ENCODE measurements at regions of chr9 and their contacts with region 1.

Region 1: GRCh38 chr9:34646211-34647083 is at the start of gene GALT:
- DNase-seq: peak; percentile 90 to 98 (median 96)
- H3K4me3 ChIP-seq: peak within 1 kb of the TSS; percentile 95
- H3K4me3 Mint-ChIP-seq: peak within 1 kb of the TSS; percentile 90 to 97 (median 93)
- H3K27ac ChIP-seq: peak within 1 kb of the TSS; percentile 83
- H3K27ac Mint-ChIP-seq: peak within 1 kb of the TSS; percentile 72 to 98 (median 91)
- H3K4me1 ChIP-seq: peaks cover 30% of the 10 kb centered on the region
- H3K4me1 Mint-ChIP-seq: peaks cover 31 to 41% (median 36%) of the 10 kb centered on the region in 3 donors
- H3K27me3 ChIP-seq: no peaks in the 10 kb centered on the region
- H3K27me3 Mint-ChIP-seq: no peaks in the 10 kb centered on the region
- total RNA-seq, gene GALT: 41.7 to 43.0 TPM

Region 2: GRCh38 chr9:34522971-34523797 is 123.3 kb before region 1 on chr9 and contains the start of gene ENHO:
- CTCF ChIA-PET with region 1: no interaction called
- POLR2A ChIA-PET with region 1: no interaction called
- DNase-seq: peak; percentile 84 to 92 (median 89)
- H3K4me3 ChIP-seq: peak within 1 kb of the TSS; percentile 56
- H3K4me3 Mint-ChIP-seq: peak within 1 kb of the TSS; percentile 72 to 89 (median 80)
- H3K27ac ChIP-seq: no peak within 1 kb of the TSS
- H3K27ac Mint-ChIP-seq: peak within 1 kb of the TSS in 6 of 8 donors; percentile 4 to 90 (median 76)
- H3K4me1 ChIP-seq: peaks cover 8% of the 10 kb centered on the region
- H3K4me1 Mint-ChIP-seq: peaks cover 4 to 14% (median 13%) of the 10 kb centered on the region in 3 donors
- H3K27me3 ChIP-seq: no peaks in the 10 kb centered on the region
- H3K27me3 Mint-ChIP-seq: peaks cover 5 to 9% of the 10 kb centered on the region in 2 donors
- total RNA-seq, gene ENHO: 0.35 to 0.39 TPM

Region 3: GRCh38 chr9:34620061-34620994 is 26.1 kb before region 1 on chr9 and contains the start of gene DCTN3:
- CTCF ChIA-PET with region 1: interaction called, 14 read pairs
- POLR2A ChIA-PET with region 1: interaction called, 3 read pairs
- DNase-seq: peak; percentile 86 to 96 (median 89)
- H3K4me3 ChIP-seq: peak within 1 kb of the TSS; percentile 64
- H3K4me3 Mint-ChIP-seq: peak within 1 kb of the TSS; percentile 93 to 97 (median 95)
- H3K27ac ChIP-seq: peak within 1 kb of the TSS; percentile 59
- H3K27ac Mint-ChIP-seq: peak within 1 kb of the TSS; percentile 72 to 97 (median 95)
- H3K4me1 ChIP-seq: peaks cover 19% of the 10 kb centered on the region
- H3K4me1 Mint-ChIP-seq: peaks cover 28 to 42% (median 29%) of the 10 kb centered on the region in 3 donors
- H3K27me3 ChIP-seq: peaks cover 27% of the 10 kb centered on the region
- H3K27me3 Mint-ChIP-seq: peaks cover 30 to 31% of the 10 kb centered on the region in 2 donors
- total RNA-seq, gene DCTN3: 83.3 to 83.4 TPM

Region 4: DNA sequence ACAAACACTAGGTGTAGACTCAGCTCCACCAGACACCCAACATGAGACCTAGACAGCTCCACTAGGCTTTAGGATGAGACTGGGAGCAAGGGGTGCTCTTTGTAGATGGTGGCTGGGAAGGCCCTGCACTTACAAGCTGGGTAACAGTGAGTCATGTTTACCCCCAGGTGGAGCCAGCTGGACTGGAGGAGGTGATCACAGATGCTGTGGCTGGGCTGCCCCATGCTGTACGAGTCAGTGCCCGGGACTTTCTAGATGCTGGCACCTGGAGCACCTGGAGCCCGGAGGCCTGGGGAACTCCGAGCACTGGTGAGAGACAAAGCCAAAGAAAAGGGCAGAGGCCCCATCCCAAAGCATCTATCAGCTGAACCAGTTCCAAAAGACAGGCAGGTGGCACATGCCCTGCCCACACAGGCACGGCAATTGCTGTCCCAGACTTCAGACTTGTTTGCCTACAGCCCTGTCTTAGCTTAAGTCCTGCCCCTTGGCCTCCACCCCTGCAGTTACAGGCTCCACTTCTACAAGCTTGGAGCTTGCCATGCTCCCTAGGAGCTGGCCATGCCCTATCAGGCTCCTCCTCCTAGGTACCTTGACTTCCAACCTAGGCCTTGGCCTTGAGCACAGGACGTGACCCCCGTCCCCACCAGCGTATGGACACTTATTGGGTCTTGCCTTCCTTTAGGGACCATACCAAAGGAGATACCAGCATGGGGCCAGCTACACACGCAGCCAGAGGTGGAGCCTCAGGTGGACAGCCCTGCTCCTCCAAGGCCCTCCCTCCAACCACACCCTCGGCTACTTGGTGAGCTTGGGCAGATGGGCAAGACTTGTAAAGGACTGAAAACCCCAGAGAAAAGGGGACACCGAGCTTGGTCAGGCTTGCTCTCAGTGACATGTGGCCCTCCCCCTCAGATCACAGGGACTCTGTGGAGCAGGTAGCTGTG is 13.4 kb after region 1 on chr9:
- CTCF ChIA-PET with region 1: interaction called, 54 read pairs
- POLR2A ChIA-PET with region 1: interaction called, 20 read pairs
- DNase-seq: no peak
- H3K4me3 ChIP-seq: no peak overlapping the region
- H3K4me3 Mint-ChIP-seq: peak overlapping the region in 1 of 7 donors; percentile 8
- H3K27ac ChIP-seq: no peak overlapping the region
- H3K27ac Mint-ChIP-seq: peak overlapping the region in 2 of 8 donors; percentile 66 to 75
- H3K4me1 ChIP-seq: peaks cover 37% of the 10 kb centered on the region
- H3K4me1 Mint-ChIP-seq: peaks cover 28 to 39% (median 35%) of the 10 kb centered on the region in 3 donors
- H3K27me3 ChIP-seq: no peaks in the 10 kb centered on the region
- H3K27me3 Mint-ChIP-seq: no peaks in the 10 kb centered on the region

Region 5: DNA sequence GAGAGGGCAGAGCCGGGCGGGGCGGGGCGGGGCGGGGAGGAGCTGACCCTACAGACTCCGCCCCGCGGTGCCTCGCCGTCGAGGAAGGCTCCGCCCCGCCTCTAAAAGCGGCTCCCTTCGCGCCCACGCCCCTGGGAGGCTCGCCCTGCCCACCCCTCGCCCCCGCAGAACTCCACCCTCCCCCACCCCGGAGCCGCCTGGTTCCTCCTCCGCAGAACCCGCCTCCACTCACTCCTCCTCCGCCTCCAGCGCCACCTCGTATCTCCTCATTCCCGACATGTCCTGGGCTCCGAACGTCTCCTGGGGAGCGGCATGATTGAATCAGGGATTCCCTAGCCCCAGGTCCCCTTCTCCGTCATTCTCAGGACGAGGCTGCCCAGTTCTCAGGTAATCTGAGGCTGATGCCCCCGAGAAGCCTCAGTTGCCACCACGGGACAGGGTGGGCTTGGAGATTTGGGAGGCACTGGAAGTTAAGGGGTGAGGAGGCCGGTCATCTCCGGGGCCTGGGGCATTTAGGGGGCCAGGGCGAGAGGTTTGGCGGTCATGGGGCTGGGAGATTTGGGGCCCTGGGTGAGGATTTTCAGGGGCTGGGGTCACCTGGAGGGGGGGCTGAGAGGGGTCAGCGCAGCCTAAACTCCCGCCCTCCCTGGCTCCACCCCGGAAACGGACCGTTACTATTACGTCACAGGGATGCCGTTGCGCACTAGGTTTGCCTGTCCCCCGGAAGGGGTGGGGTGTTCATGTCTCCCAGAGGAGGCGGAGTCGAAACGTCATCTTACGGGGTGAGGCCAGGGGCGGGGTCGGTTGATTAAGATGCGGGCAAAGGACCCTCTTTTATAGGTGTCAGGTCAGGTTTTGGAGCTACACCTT is 19.2 kb after region 1 on chr9:
- CTCF ChIA-PET with region 1: interaction called, 54 read pairs
- POLR2A ChIA-PET with region 1: interaction called, 20 read pairs
- DNase-seq: peak; percentile 84 to 93 (median 86)
- H3K4me3 ChIP-seq: peak overlapping the region; percentile 87
- H3K4me3 Mint-ChIP-seq: peak overlapping the region; percentile 82 to 97 (median 89)
- H3K27ac ChIP-seq: peak overlapping the region; percentile 96
- H3K27ac Mint-ChIP-seq: peak overlapping the region; percentile 87 to 99 (median 98)
- H3K4me1 ChIP-seq: peaks cover 48% of the 10 kb centered on the region
- H3K4me1 Mint-ChIP-seq: peaks cover 34 to 55% (median 41%) of the 10 kb centered on the region in 3 donors
- H3K27me3 ChIP-seq: no peaks in the 10 kb centered on the region
- H3K27me3 Mint-ChIP-seq: peaks cover 0 to 4% of the 10 kb centered on the region in 2 donors

Region 6: DNA sequence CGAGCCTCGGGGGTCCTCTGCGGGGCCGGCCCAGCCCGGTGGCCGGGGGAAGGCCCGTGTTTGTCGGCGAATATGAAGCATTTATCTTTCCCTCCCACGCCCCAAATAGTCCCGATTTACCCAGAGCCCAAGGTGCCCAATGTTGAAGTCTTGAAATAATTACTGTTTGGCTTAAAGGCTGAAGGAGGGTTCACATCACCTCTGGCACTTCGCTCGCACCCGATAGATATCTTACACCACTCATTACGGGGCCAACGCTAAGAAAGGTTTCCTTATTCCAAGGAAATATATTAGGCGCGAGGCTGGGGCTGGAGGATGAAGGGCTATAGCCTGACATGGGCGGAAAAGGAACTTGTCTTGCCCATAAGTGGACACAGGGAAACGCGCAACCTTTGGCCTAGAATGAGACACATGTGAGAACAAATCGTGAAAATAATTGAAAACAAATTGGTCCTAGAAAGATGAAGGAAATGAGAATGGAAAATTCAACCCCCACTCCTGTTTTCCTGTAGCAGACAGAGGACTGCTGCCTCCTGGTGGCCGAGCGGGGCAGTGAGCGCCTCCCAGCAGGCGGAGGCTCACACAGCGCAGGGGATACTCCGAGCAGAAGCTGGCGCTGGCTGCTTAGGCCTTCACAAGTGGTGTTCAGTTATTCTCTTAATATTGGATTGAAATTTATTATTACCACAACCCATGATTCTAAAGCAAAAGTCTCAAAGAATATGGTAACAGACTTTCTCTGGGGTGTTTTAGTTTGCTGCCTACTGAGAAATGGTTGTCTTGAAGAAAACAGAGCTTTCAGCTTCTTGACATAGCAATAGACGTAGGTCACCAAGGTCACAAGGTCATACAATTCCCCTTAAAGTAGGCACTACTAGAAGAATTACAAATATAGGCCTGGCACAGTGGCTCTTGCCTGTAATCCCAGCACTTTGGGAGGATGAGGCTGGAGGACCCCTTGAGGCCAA is 55.6 kb after region 1 on chr9:
- CTCF ChIA-PET with region 1: interaction called, 27 read pairs
- POLR2A ChIA-PET with region 1: no interaction called
- DNase-seq: peak; percentile 59 to 84 (median 70)
- H3K4me3 ChIP-seq: peak overlapping the region; percentile 62
- H3K4me3 Mint-ChIP-seq: peak overlapping the region; percentile 72 to 89 (median 83)
- H3K27ac ChIP-seq: no peak overlapping the region
- H3K27ac Mint-ChIP-seq: peak overlapping the region in 6 of 8 donors; percentile 10 to 70 (median 51)
- H3K4me1 ChIP-seq: peaks cover 9% of the 10 kb centered on the region
- H3K4me1 Mint-ChIP-seq: peaks cover 6 to 16% (median 13%) of the 10 kb centered on the region in 3 donors
- H3K27me3 ChIP-seq: no peaks in the 10 kb centered on the region
- H3K27me3 Mint-ChIP-seq: peaks cover 8 to 9% of the 10 kb centered on the region in 2 donors

Measured in CD8-positive, alpha-beta memory T cell (primary cell).